ENCODE measurements at regions of chr13 and their contacts with region 1.

Region 1: DNA sequence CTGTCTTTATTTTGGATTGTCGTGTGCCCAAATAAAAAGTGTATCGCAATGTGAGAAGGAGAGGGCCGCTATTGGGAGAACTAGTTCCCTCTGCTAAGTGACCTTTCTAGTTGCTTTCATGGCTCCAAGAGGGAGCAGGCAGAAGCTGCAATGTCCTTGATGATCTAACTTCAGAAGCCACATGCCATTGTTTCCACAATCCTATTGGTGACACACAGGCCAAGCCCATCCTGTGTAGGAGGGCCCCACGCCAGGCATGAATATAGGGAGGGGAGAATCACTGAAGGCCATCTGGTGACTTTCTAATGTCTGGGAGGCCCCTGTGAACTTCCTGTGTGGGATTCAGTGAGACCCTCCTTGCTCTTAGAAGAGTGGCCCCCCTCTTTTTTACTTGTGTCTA is 47.8 kb upstream of the KPNA3 start:
- DNase-seq: no peak
- ATAC-seq: peak in 3 of 4 donors; percentile 32 to 42 (median 36)
- H3K4me3 ChIP-seq: no peak overlapping the region
- H3K27ac ChIP-seq: no peak overlapping the region
- H3K4me1 ChIP-seq: no peaks in the 10 kb centered on the region
- H3K27me3 ChIP-seq: no peaks in the 10 kb centered on the region
- CTCF ChIP-seq: no peak
- POLR2A ChIP-seq: no peak

Region 2: DNA sequence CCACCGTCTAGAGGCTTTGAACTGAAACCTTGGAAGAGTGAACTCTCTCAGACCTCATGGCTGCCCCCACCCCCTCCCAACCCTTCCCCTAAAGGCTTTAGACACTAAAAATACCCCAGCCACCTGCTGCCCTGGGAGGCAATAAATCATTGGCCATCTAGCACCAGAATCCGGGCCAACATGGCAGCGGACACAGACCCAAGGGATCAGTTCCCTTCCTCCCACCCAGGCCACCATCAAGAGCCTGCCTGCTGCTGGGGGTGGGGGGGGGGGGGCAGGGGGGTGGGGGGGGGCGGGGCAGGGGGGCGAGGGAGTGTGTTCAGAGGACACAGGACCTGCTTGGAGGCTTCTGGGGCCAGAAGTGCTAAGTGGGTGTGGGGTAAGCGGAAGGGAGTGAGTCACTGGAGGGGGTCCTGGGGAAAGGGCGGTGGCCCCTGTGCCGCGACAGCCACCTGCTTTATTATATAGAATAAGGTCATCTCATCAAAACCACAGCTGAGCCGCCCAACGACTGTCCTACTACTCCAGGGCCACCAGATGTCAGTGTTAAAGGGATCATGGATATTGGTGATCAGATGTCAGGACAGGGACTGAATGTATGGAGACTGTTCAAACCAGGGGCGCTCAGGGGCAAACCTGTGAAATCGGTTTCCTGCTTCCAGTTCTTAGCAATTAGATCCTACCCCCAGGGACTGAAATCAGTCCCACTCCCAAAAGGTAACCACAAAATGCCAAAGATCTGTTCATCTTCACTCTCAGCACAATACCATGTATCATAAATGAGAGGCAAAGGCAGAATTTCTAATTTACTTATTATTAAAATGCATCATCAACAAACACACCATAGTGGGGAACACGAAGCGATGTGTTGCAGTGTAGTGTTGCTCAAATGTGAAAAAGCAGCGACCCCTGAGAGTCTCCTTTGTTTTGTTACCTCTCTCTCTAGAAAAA is 187.6 kb before region 1 on chr13:
- intact Hi-C with region 1: loop called in 5 of 10 experiments (anchors 5 to 10 kb)
- DNase-seq: no peak
- ATAC-seq: peak; percentile 21 to 67 (median 62)
- H3K4me3 ChIP-seq: no peak overlapping the region
- H3K27ac ChIP-seq: no peak overlapping the region
- H3K4me1 ChIP-seq: peaks cover 0 to 4% (median 0%) of the 10 kb centered on the region in 12 donors
- H3K27me3 ChIP-seq: no peaks in the 10 kb centered on the region
- CTCF ChIP-seq: peak in 11 of 12 donors; percentile 13 to 58 (median 47)
- POLR2A ChIP-seq: no peak

Region 3: GRCh38 chr13:49669735-49670309 is 170.4 kb before region 1 on chr13:
- intact Hi-C with region 1: loop called in 7 of 10 experiments (anchors 5 kb)
- DNase-seq: peak in 4 of 5 donors; percentile 36 to 53 (median 48)
- ATAC-seq: peak; percentile 89 to 96 (median 93)
- H3K4me3 ChIP-seq: no peak overlapping the region
- H3K27ac ChIP-seq: no peak overlapping the region
- H3K4me1 ChIP-seq: peaks cover 0 to 9% (median 0%) of the 10 kb centered on the region in 12 donors
- H3K27me3 ChIP-seq: no peaks in the 10 kb centered on the region
- CTCF ChIP-seq: peak; percentile 55 to 84 (median 65)
- POLR2A ChIP-seq: no peak

Region 4: DNA sequence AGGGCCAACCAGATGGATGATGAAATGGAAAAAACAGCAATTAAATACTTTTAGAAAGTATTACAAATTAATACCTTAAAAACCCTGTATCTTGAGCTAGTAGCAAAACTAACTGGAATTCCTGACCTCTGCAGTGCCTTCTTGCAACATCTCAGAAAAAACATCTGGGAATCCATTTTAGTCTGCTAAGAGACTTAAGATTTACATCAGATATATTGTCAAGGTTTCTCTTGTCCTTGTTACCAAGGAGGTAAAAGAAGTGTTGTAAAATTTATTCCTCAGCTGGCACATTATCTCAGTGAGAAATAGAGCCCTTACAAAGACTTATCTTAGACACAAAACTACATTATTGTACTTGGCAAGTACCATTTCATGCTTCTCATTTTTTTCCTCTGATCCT is 193.5 kb after region 1 on chr13:
- intact Hi-C with region 1: no loop called
- DNase-seq: no peak
- ATAC-seq: no peak
- H3K4me3 ChIP-seq: no peak overlapping the region
- H3K27ac ChIP-seq: no peak overlapping the region
- H3K4me1 ChIP-seq: peaks cover 0 to 6% (median 0%) of the 10 kb centered on the region in 12 donors
- H3K27me3 ChIP-seq: no peaks in the 10 kb centered on the region
- CTCF ChIP-seq: no peak
- POLR2A ChIP-seq: no peak

Measured in heart left ventricle (tissue), 16 donors.